ENCODE measurements at regions of chr10 and their contacts with region 1.

Region 1: DNA sequence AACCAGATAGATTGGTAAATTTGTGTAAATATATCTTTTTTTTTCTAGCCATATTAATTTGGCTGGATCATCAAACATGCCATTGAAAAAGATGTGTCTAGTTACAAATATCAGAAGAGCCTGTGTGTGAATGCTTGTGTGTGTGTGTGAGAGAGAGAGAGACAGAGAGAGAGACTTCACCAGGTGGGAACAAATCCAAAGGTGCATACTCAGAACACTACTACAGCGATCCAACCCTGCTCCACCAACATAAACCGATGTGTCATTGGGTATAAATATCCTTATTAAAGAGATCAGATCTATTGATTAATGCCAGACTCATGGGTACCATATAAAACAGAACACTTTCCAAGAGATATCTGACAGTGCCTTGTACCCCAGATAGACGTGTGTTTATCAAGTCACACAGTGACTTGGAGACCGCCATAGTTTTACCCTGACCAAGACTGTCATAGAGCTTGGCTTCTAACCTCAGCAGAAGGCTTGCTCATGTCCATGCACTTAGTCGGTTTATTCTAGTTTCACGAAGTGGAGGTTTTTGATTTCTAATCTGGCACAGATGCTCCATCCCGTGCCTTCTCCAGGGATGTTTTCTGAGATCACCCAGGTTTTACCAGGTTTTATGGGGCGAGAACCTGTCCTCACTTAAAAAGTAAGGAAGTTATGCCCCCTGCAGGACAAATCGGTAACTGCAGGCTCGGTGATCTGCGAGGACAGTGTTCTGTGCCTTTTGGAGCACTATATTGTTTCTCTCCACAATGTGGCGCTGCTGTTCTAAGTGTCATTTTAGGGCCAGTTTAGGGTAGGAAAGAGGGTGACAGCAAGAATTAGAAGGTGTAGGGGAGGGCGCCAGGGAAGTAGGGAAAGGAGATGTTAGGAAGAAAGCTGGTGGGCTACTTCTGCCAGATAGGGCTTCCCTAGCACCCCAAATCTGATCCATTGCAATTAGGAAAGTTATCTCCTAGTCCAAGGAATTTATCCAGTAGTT is 29.3 kb upstream of the WNT8B start:
- DNase-seq: peak; percentile 94
- ATAC-seq: peak; percentile 99
- H3K4me3 ChIP-seq: no peak overlapping the region
- H3K4me3 Mint-ChIP-seq: no peak overlapping the region
- H3K27ac ChIP-seq: no peak overlapping the region
- H3K27ac Mint-ChIP-seq: no peak overlapping the region
- H3K4me1 ChIP-seq: no peaks in the 10 kb centered on the region
- H3K4me1 Mint-ChIP-seq: no peaks in the 10 kb centered on the region
- H3K27me3 ChIP-seq: no peaks in the 10 kb centered on the region
- H3K27me3 Mint-ChIP-seq: peaks cover 17% of the 10 kb centered on the region
- CTCF ChIP-seq: peak; percentile 100

Region 2: DNA sequence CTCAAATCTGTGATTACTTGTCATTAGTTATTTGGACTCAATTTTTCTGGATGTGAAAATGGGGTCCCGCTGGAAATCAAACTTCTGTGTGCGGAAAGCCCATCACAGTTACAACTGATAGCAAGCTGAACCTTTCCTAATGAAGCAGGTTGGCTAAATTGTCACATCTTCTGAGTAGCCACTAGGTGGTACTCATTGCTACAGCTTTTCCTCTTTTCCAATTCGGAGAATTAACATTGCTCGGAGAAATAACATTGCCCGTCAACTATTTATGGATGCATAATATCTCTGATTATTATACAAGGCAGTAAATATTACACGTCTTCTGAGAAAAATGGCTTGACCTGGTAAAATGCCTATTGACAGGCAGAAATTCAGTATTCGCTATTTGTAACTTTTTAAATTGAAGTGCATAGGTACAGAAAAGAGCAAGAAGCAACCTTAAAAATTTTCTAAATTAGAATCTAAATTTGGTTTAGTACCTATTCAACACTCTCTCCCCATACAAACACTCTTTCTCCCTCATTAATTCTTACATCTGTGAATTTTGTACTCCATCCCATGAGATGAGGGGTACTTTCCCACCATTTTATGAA is 129.7 kb before region 1 on chr10:
- CTCF ChIA-PET with region 1: interaction called, 33 read pairs
- POLR2A ChIA-PET with region 1: no interaction called
- intact Hi-C with region 1: loop called (anchors 1 kb)
- DNase-seq: peak; percentile 42
- ATAC-seq: no peak
- H3K4me3 ChIP-seq: no peak overlapping the region
- H3K4me3 Mint-ChIP-seq: no peak overlapping the region
- H3K27ac ChIP-seq: no peak overlapping the region
- H3K27ac Mint-ChIP-seq: no peak overlapping the region
- H3K4me1 ChIP-seq: peaks cover 0 to 3% of the 10 kb centered on the region in 2 donors
- H3K4me1 Mint-ChIP-seq: no peaks in the 10 kb centered on the region
- H3K27me3 ChIP-seq: peaks cover 0 to 5% (median 0%) of the 10 kb centered on the region in 4 experiments
- H3K27me3 Mint-ChIP-seq: peaks cover 47% of the 10 kb centered on the region
- CTCF ChIP-seq: peak; percentile 70

Region 3: GRCh38 chr10:100338434-100339036 is 95.0 kb before region 1 on chr10:
- CTCF ChIA-PET with region 1: interaction called, 218 read pairs
- POLR2A ChIA-PET with region 1: interaction called, 4 read pairs
- intact Hi-C with region 1: loop called (anchors 1 kb)
- DNase-seq: peak; percentile 83
- ATAC-seq: peak; percentile 78
- H3K4me3 ChIP-seq: peak overlapping the region in 1 of 5 experiments; percentile 19
- H3K4me3 Mint-ChIP-seq: peak overlapping the region; percentile 72
- H3K27ac ChIP-seq: peak overlapping the region; percentile 38 to 49
- H3K27ac Mint-ChIP-seq: peak overlapping the region; percentile 67
- H3K4me1 ChIP-seq: peaks cover 20 to 24% of the 10 kb centered on the region in 2 donors
- H3K4me1 Mint-ChIP-seq: peaks cover 26% of the 10 kb centered on the region
- H3K27me3 ChIP-seq: peaks cover 0 to 6% (median 0%) of the 10 kb centered on the region in 4 experiments
- H3K27me3 Mint-ChIP-seq: peaks cover 11% of the 10 kb centered on the region
- CTCF ChIP-seq: peak; percentile 96

Region 4: GRCh38 chr10:100446130-100446761 is 12.7 kb after region 1 on chr10:
- CTCF ChIA-PET with region 1: interaction called, 10 read pairs
- POLR2A ChIA-PET with region 1: no interaction called
- intact Hi-C with region 1: no loop called
- DNase-seq: no peak
- ATAC-seq: no peak
- H3K4me3 ChIP-seq: no peak overlapping the region
- H3K4me3 Mint-ChIP-seq: no peak overlapping the region
- H3K27ac ChIP-seq: no peak overlapping the region
- H3K27ac Mint-ChIP-seq: no peak overlapping the region
- H3K4me1 ChIP-seq: no peaks in the 10 kb centered on the region
- H3K4me1 Mint-ChIP-seq: no peaks in the 10 kb centered on the region
- H3K27me3 ChIP-seq: peaks cover 0 to 5% (median 0%) of the 10 kb centered on the region in 4 experiments
- H3K27me3 Mint-ChIP-seq: peaks cover 18% of the 10 kb centered on the region
- CTCF ChIP-seq: no peak

Region 5: GRCh38 chr10:100743626-100744135 is 310.1 kb after region 1 on chr10:
- CTCF ChIA-PET with region 1: no interaction called
- POLR2A ChIA-PET with region 1: no interaction called
- intact Hi-C with region 1: loop called (anchors 5 kb)
- DNase-seq: peak; percentile 79
- ATAC-seq: peak; percentile 61
- H3K4me3 ChIP-seq: no peak overlapping the region
- H3K4me3 Mint-ChIP-seq: peak overlapping the region; percentile 66
- H3K27ac ChIP-seq: no peak overlapping the region
- H3K27ac Mint-ChIP-seq: no peak overlapping the region
- H3K4me1 ChIP-seq: peaks cover 71 to 89% of the 10 kb centered on the region in 2 donors
- H3K4me1 Mint-ChIP-seq: peaks cover 52% of the 10 kb centered on the region
- H3K27me3 ChIP-seq: peaks cover 0 to 94% (median 73%) of the 10 kb centered on the region in 4 experiments
- H3K27me3 Mint-ChIP-seq: peaks cover 70% of the 10 kb centered on the region
- CTCF ChIP-seq: peak; percentile 69

Measured in B cell (primary cell).